Activated naive CD4-positive, alpha-beta T cell treated with anti-CD3 and anti-CD28 coated beads for 36 hours (primary cell): ENCODE measurements at regions of chr1 and their contacts with region 1.

Region 1: GRCh38 chr1:18575620-18576019 is 55.0 kb upstream of the PAX7 start:
- DNase-seq: peak; percentile 66
- H3K4me3 Mint-ChIP-seq: no peak overlapping the region
- H3K27ac Mint-ChIP-seq: no peak overlapping the region
- H3K4me1 Mint-ChIP-seq: no peaks in the 10 kb centered on the region
- H3K27me3 Mint-ChIP-seq: peaks cover 4% of the 10 kb centered on the region

Region 2: DNA sequence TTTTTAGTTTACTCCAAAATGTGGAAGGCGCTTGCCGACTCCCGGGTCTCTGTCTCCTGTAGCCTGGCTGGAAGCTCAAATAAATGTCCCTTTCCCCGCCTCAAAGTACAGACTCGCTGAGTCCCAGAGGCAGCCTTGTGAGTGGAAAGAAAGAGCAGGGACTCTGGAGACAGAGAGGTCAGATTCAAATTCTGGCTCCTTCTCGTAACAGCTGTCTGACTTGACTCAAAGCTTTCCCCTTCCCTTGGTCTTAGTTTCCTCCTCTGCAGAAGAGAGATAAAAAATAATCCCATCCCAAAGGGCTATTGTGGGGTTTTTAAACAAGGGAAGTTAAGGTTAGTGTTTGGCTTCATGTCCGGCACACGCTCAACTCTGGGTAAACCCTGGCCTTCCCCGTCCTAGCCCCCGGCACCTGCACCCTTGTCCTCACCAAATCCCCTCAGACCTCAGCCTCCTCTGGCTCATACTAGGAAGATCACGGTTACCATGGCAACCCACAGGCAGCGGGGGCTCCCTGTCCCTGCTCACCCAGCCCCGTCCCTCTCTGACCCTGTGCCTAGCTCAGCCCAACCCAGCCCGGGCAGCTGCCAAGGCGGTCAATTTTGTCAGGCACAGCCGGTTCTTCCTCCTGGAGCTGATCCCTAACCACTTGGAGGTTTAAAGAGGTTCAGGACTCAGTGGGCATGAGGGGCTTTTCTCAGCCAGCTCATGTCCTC is 517.3 kb before region 1 on chr1:
- CTCF ChIA-PET with region 1: no interaction called
- intact Hi-C with region 1: no loop called
- DNase-seq: no peak
- H3K4me3 Mint-ChIP-seq: no peak overlapping the region
- H3K27ac Mint-ChIP-seq: no peak overlapping the region
- H3K4me1 Mint-ChIP-seq: no peaks in the 10 kb centered on the region
- H3K27me3 Mint-ChIP-seq: peaks cover 4% of the 10 kb centered on the region

Region 3: GRCh38 chr1:18556364-18556763 is 19.3 kb before region 1 on chr1:
- CTCF ChIA-PET with region 1: interaction called, 12 read pairs
- intact Hi-C with region 1: no loop called
- DNase-seq: no peak
- H3K4me3 Mint-ChIP-seq: no peak overlapping the region
- H3K27ac Mint-ChIP-seq: no peak overlapping the region
- H3K4me1 Mint-ChIP-seq: peaks cover 11% of the 10 kb centered on the region
- H3K27me3 Mint-ChIP-seq: peaks cover 33% of the 10 kb centered on the region